ENCODE measurements at regions of chr5 and their contacts with region 1.

Region 1: GRCh38 chr5:177473461-177474001 is at the start of gene DBN1:
- DNase-seq: peak; percentile 70
- ATAC-seq: peak; percentile 25
- H3K4me3 Mint-ChIP-seq: peak within 1 kb of the TSS; percentile 83
- H3K27ac Mint-ChIP-seq: peak within 1 kb of the TSS; percentile 85
- H3K4me1 Mint-ChIP-seq: peaks cover 60% of the 10 kb centered on the region
- H3K27me3 Mint-ChIP-seq: no peaks in the 10 kb centered on the region
- total RNA-seq, gene DBN1: 82.5 to 87.0 TPM

Region 2: DNA sequence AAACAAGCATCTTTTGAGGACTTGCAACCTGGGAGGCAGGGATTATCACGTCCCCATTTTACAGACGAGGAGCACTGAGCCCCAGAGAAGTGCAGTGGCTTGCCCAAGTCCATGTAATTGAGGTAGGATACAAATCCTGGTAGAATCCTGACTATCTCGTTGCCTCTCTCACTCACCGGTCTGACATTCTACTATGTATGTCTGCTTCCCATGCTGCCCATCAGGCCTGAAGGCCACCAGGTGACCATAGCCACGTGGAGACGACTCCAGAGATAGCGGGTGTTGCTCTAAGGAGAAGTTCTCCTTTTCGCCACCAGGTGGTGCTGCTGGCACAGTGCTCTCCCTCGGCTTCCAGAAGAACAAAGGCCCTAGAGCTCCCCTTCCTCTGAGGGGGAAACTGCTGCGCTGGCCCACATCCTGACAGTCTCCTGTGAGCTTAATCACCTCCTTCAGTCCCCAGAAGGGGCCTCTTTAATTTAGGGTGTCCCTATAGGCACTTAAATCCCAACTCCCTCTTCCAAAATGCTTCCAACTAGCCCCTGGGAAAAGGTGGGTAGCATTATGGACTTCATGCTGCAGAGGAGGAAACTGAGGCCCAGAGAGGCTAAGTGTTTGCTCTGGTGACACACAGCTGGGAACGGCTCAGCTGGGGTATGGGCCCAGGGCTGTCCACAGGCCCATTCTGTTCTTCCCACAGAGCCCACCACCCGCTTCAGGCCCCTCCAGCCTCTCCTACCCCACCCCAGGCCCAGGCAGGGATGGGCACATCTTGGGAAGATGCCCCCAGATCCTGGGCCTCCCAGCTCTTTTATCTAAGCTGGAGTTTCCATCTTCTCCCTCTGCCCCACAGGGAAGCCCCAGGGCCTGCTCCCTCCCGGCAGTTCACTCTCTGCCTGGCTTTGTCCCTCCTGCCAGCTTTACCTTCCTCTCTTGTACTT is 82.9 kb before region 1 on chr5:
- POLR2A ChIA-PET with region 1: interaction called, 11 read pairs
- DNase-seq: peak; percentile 83
- ATAC-seq: peak; percentile 88
- H3K4me3 Mint-ChIP-seq: peak overlapping the region; percentile 56
- H3K27ac Mint-ChIP-seq: peak overlapping the region; percentile 88
- H3K4me1 Mint-ChIP-seq: peaks cover 36% of the 10 kb centered on the region
- H3K27me3 Mint-ChIP-seq: peaks cover 3% of the 10 kb centered on the region

Region 3: DNA sequence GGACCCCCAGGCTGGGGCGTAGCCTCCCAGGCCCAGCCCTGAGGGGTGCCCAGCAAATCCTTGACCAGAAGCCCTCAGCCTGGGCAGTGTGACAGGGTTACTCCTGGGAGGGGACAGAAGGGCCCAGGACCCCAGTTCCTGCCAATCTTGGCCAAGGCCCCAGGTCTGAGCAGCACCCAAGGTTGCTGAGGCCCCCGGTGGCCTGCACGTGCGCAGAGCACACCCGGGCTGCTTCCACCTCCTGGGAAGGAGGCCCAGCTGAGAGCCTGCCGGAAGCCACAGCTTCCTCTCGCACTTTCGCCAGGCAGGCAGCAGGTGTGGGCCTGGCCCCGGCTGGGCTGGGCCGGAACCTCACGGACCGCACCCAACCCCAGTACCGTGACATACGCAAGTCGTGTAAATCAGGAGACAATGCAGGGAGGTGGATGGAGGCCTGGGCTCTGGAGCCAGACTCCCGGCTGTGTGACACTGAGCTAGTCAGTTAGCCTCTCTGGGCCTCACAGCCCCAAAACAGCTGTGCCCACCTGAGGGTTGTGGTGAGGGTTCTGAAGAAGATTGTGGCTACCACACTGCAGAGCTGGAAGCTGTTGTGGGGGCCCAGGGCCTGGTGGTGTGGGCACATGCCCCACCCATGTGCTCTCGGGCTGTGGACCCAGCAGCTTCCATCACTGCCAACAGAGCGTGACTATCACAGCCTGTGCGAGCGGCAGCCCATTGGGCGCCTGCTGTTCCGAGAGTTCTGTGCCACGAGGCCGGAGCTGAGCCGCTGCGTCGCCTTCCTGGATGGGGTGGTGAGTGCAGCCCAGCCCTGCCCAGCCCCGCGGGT is 42.0 kb before region 1 on chr5:
- POLR2A ChIA-PET with region 1: interaction called, 11 read pairs
- DNase-seq: peak; percentile 81
- ATAC-seq: peak; percentile 51
- H3K4me3 Mint-ChIP-seq: peak overlapping the region; percentile 94
- H3K27ac Mint-ChIP-seq: peak overlapping the region; percentile 83
- H3K4me1 Mint-ChIP-seq: peaks cover 47% of the 10 kb centered on the region
- H3K27me3 Mint-ChIP-seq: no peaks in the 10 kb centered on the region

Region 4: GRCh38 chr5:177446200-177447065 is 27.1 kb before region 1 on chr5 and contains the start of gene PRR7:
- POLR2A ChIA-PET with region 1: interaction called, 12 read pairs
- DNase-seq: peak; percentile 89
- ATAC-seq: peak; percentile 76
- H3K4me3 Mint-ChIP-seq: peak within 1 kb of the TSS; percentile 80
- H3K27ac Mint-ChIP-seq: peak within 1 kb of the TSS; percentile 87
- H3K4me1 Mint-ChIP-seq: peaks cover 30% of the 10 kb centered on the region
- H3K27me3 Mint-ChIP-seq: no peaks in the 10 kb centered on the region
- total RNA-seq, gene PRR7: 10.0 to 10.6 TPM

Region 5: GRCh38 chr5:177454397-177455035 is 19.0 kb before region 1 on chr5:
- POLR2A ChIA-PET with region 1: interaction called, 24 read pairs
- DNase-seq: peak; percentile 98
- ATAC-seq: peak; percentile 51
- H3K4me3 Mint-ChIP-seq: peak overlapping the region; percentile 85
- H3K27ac Mint-ChIP-seq: peak overlapping the region; percentile 64
- H3K4me1 Mint-ChIP-seq: peaks cover 11% of the 10 kb centered on the region
- H3K27me3 Mint-ChIP-seq: peaks cover 6% of the 10 kb centered on the region

Region 6: GRCh38 chr5:177462021-177462670 is 11.4 kb before region 1 on chr5:
- POLR2A ChIA-PET with region 1: interaction called, 25 read pairs
- DNase-seq: peak; percentile 62
- ATAC-seq: peak; percentile 34
- H3K4me3 Mint-ChIP-seq: peak overlapping the region; percentile 88
- H3K27ac Mint-ChIP-seq: peak overlapping the region; percentile 98
- H3K4me1 Mint-ChIP-seq: peaks cover 23% of the 10 kb centered on the region
- H3K27me3 Mint-ChIP-seq: no peaks in the 10 kb centered on the region

Region 7: DNA sequence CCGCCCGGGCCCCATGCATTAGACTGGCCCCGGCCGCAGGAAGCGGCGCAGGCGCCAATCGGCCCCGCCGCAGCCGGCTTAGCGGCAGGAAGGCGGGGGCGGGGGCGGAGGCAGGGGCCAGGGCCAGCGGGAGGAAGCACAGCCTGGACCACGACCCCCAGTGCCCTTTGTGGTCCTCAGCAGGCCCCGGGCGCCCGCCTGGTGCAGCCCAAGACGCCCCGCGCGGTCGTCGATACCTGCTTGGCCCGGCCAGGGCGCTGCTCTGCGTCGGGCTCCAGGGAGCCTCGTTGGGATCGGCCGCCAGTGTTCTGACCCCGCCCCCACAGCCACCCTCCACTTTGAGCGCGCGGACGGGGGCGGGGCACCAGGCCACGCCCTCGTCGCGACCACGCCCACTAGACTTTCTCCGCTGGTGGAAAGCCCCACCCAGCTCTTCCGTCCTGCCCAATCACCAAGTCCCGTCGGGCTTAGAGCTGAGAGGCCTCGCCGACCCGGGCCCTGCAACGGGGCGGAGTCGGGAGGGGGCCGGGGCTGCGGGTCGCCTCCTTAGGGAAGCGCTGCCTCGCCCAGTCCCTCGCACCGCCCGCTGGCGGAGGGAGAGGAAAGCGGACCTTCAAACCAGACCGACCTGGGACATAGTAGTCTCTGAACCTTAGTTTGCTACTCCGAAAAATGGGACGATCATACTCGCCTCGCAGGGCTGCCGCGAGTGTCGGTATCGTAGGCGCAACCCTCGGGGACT is 23.9 kb after region 1 on chr5 and contains the start of gene PDLIM7:
- POLR2A ChIA-PET with region 1: interaction called, 34 read pairs
- DNase-seq: peak; percentile 98
- ATAC-seq: peak; percentile 83
- H3K4me3 Mint-ChIP-seq: peak within 1 kb of the TSS; percentile 87
- H3K27ac Mint-ChIP-seq: peak within 1 kb of the TSS; percentile 77
- H3K4me1 Mint-ChIP-seq: peaks cover 38% of the 10 kb centered on the region
- H3K27me3 Mint-ChIP-seq: peaks cover 17% of the 10 kb centered on the region
- total RNA-seq, gene PDLIM7: 51.6 to 60.6 TPM

Measured in activated naive CD8-positive, alpha-beta T cell treated with anti-CD3 and anti-CD28 coated beads, Interleukin-2, amount 10 ng/mL, durations not matched to agents 7 days and 5 days (primary cell).